ENCODE measurements at regions of chr21 and their contacts with region 1.

Region 1: GRCh38 chr21:42833439-42833815 is 45.9 kb downstream of the WDR4 start:
- DNase-seq: peak; percentile 10
- ATAC-seq: peak; percentile 73
- H3K4me3 ChIP-seq: no peak overlapping the region
- H3K27ac ChIP-seq: no peak overlapping the region
- H3K4me1 ChIP-seq: peaks cover 0 to 10% of the 10 kb centered on the region in 2 experiments; a peak in 1 of 4 replicates
- H3K27me3 ChIP-seq: no peaks in the 10 kb centered on the region
- CTCF ChIP-seq: peak; percentile 50 to 53 (median 51); a peak in 5 of 6 replicates
- POLR2A ChIP-seq: no peak
- RAD21 ChIP-seq: peak; percentile 27; the same call in 1 of the 2 replicates

Region 2: GRCh38 chr21:42593007-42593806 is 240.2 kb before region 1 on chr21:
- CTCF ChIA-PET with region 1: interaction called, 14 read pairs
- POLR2A ChIA-PET with region 1: no interaction called
- RAD21 ChIA-PET with region 1: interaction called, 4 to 5 read pairs
- intact Hi-C with region 1: loop called (anchors 1 kb)
- DNase-seq: peak; percentile 42
- ATAC-seq: peak; percentile 100
- H3K4me3 ChIP-seq: no peak overlapping the region
- H3K27ac ChIP-seq: no peak overlapping the region
- H3K4me1 ChIP-seq: peaks cover 3 to 9% of the 10 kb centered on the region in 2 experiments; a peak in 2 of 4 replicates
- H3K27me3 ChIP-seq: no peaks in the 10 kb centered on the region
- CTCF ChIP-seq: peak; percentile 67 to 82 (median 75)
- POLR2A ChIP-seq: no peak
- RAD21 ChIP-seq: peak; percentile 87

Region 3: GRCh38 chr21:43025636-43026307 is 192.3 kb after region 1 on chr21:
- CTCF ChIA-PET with region 1: no interaction called
- POLR2A ChIA-PET with region 1: no interaction called
- RAD21 ChIA-PET with region 1: no interaction called
- intact Hi-C with region 1: no loop called
- DNase-seq: no peak
- ATAC-seq: no peak
- H3K4me3 ChIP-seq: no peak overlapping the region
- H3K27ac ChIP-seq: no peak overlapping the region
- H3K4me1 ChIP-seq: no peaks in the 10 kb centered on the region
- H3K27me3 ChIP-seq: no peaks in the 10 kb centered on the region
- CTCF ChIP-seq: no peak
- POLR2A ChIP-seq: no peak
- RAD21 ChIP-seq: no peak